ENCODE measurements at regions of chr6 and their contacts with region 1.

Region 1: GRCh38 chr6:37566111-37566949 is 66.6 kb upstream of the CCDC167 start:
- DNase-seq: peak in 6 of 7 donors; percentile 46 to 74 (median 54)
- H3K4me3 ChIP-seq: peak overlapping the region in 1 of 4 donors; percentile 15
- H3K27ac ChIP-seq: peak overlapping the region in 1 of 5 donors; percentile 59
- H3K4me1 ChIP-seq: peaks cover 0 to 12% of the 10 kb centered on the region in 2 donors
- H3K27me3 ChIP-seq: no peaks in the 10 kb centered on the region
- CTCF ChIP-seq: peak; percentile 67 to 87 (median 80)
- POLR2A ChIP-seq: no peak

Region 2: GRCh38 chr6:37324131-37325033 is 241.9 kb before region 1 on chr6:
- intact Hi-C with region 1: loop called in 1 of 2 experiments (anchors 10 kb)
- DNase-seq: peak in 3 of 7 donors; percentile 18 to 41 (median 28)
- H3K4me3 ChIP-seq: no peak overlapping the region
- H3K27ac ChIP-seq: peak overlapping the region in 1 of 5 donors; percentile 48
- H3K4me1 ChIP-seq: peaks cover 3 to 16% of the 10 kb centered on the region in 2 donors
- H3K27me3 ChIP-seq: no peaks in the 10 kb centered on the region
- CTCF ChIP-seq: no peak
- POLR2A ChIP-seq: no peak

Region 3: DNA sequence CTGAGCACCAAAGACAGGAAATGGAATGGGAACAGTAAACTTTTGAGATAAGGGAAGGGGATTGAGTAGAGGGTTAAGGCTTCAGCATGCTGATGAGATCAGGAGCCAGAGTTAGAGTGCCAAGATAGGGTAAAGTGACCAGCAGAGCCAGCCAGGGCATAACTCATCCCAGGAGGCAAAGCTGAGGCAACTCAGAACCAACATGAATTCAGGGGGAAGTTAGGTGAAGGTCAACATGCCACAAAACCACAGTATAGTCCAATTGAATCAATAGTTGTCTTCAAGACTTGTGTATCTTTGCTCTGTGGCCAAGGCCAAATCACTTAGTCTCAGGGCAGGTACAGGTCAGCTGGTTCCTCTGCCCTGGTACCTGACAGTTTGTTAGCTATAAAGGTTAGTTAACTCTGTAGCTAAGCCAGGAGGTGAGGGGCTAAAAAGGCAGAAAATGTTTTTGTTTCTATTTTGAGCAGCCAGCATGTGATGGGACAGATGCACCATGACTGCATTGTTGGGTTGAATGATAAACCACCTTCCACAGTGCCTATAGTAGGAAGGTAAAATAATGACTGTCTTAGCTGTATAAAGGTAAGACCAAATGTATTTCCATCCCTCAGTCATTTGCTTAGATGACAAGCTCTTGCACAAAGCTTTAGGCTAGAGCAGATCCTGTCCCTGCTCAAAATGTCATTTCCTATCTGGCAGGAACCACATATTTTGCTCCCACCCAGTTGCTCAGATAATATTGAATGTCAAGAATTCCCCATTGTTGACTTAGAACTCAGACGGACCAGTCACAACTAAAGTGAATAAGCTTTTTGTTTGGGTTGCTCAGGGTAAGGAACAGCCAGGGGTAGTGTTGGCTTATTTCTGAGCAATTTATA is 196.8 kb before region 1 on chr6:
- intact Hi-C with region 1: loop called in 1 of 2 experiments (anchors 10 kb)
- DNase-seq: peak in 1 of 7 donors; percentile 10
- H3K4me3 ChIP-seq: no peak overlapping the region
- H3K27ac ChIP-seq: no peak overlapping the region
- H3K4me1 ChIP-seq: peaks cover 3% of the 10 kb centered on the region in 2 donors
- H3K27me3 ChIP-seq: no peaks in the 10 kb centered on the region
- CTCF ChIP-seq: no peak
- POLR2A ChIP-seq: no peak

Region 4: DNA sequence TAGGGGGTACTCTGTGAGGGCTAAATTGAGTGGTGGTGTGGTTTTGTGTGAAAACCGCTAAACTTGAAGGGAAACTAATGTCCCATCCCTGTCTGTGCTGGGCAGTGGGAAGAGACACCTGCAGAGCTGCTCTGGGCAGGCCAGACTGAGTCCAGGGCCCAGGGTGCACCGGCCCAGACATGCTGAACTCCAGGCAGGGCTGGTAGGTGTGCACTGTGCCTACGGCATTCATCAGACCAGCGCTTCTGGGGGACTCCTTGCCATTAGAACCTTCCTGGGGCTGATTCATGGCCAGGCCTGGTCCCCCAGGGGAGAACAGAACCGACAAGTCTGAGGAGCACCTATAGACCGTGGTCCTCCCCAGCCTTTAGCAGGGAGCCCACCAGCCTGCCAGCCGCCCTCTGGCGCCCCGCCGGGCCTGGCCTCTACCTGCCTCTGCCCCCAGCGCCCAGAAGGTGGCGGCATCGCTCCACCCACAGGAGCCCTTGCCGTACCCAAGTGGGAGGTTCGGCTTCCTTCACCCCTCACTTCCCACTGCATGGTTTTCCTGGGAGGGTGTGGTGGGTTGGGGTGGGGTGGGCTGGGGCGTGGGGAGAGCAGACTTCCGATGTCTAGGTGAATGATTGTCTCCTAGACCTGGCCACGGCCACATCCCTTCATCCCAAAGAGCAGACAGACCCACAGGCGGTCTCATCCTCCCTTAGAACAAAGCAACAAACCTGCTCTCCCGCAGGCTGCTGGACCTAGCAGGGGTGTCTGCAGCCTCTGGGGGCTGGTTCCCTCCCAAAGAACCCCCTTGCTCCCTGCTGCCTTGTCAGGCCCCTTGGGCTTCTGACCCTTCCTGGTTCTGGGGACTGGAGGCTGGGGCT is 82.2 kb before region 1 on chr6:
- intact Hi-C with region 1: loop called (anchors 5 to 10 kb)
- DNase-seq: peak; percentile 45 to 79 (median 66)
- H3K4me3 ChIP-seq: no peak overlapping the region
- H3K27ac ChIP-seq: no peak overlapping the region
- H3K4me1 ChIP-seq: no peaks in the 10 kb centered on the region
- H3K27me3 ChIP-seq: no peaks in the 10 kb centered on the region
- CTCF ChIP-seq: peak; percentile 64 to 89 (median 70)
- POLR2A ChIP-seq: no peak

Region 5: GRCh38 chr6:37643851-37644672 is 77.7 kb after region 1 on chr6:
- intact Hi-C with region 1: no loop called
- DNase-seq: no peak
- H3K4me3 ChIP-seq: no peak overlapping the region
- H3K27ac ChIP-seq: no peak overlapping the region
- H3K4me1 ChIP-seq: peaks cover 5 to 6% of the 10 kb centered on the region in 2 donors
- H3K27me3 ChIP-seq: no peaks in the 10 kb centered on the region
- CTCF ChIP-seq: no peak
- POLR2A ChIP-seq: no peak

Region 6: DNA sequence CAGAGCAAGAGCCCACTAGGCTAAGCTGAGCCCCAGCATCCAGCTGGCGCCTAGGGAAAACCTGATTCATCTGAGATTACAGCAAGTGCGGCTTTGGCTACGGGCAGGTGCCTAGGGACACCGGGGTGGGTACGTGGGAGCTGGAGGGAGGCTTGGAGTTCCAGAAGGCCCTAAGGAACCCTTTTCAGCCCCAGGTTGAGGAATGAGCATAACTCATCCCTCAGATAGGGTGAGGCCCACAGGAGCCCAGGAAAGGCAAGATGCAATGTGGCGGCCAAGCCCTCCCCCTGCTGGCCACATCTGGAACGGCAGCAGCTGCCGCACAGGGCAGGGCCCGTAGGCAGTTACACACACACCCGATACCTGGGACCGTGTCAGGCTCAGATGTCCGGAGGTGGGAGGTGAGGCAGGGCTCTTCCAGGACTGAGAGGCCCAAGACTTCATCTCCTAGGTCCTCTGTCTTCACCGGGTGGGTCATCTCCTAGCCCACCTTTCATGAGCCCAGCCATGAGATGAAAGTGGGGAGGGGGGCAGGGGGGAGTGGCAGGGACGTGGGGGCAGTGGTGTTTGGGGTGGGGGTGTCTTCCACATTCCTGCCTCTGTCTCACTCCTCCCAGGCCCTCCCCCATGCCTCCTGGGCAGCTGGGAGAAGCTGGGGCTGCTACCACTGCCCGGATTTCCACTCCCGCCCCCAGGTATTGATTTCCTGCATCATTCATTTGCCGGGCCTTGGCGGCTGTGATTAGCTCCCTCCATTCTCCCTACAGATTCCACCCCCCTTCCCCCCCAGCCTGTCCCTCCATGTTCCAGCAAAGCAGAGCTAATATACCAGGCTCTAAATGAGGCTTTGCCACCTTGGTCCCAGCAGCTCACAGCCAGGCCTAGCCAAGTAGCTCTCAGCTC is 125.8 kb after region 1 on chr6:
- intact Hi-C with region 1: loop called in 1 of 2 experiments (anchors 5 kb)
- DNase-seq: peak; percentile 65 to 92 (median 78)
- H3K4me3 ChIP-seq: no peak overlapping the region
- H3K27ac ChIP-seq: peak overlapping the region in 1 of 5 donors; percentile 62
- H3K4me1 ChIP-seq: peaks cover 11 to 42% of the 10 kb centered on the region in 2 donors
- H3K27me3 ChIP-seq: no peaks in the 10 kb centered on the region
- CTCF ChIP-seq: peak; percentile 91 to 98 (median 94)
- POLR2A ChIP-seq: no peak

Region 7: GRCh38 chr6:37783856-37784584 is 217.7 kb after region 1 on chr6:
- intact Hi-C with region 1: no loop called
- DNase-seq: no peak
- H3K4me3 ChIP-seq: peak overlapping the region in 2 of 4 donors; percentile 4 to 53
- H3K27ac ChIP-seq: peak overlapping the region in 1 of 5 donors; percentile 35
- H3K4me1 ChIP-seq: peaks cover 0 to 11% of the 10 kb centered on the region in 2 donors
- H3K27me3 ChIP-seq: no peaks in the 10 kb centered on the region
- CTCF ChIP-seq: no peak
- POLR2A ChIP-seq: no peak

Measured in adrenal gland (tissue), 19 donors.